SK-N-SH (cell line): ENCODE measurements at regions of chr11 and their contacts with region 1.

Region 1: DNA sequence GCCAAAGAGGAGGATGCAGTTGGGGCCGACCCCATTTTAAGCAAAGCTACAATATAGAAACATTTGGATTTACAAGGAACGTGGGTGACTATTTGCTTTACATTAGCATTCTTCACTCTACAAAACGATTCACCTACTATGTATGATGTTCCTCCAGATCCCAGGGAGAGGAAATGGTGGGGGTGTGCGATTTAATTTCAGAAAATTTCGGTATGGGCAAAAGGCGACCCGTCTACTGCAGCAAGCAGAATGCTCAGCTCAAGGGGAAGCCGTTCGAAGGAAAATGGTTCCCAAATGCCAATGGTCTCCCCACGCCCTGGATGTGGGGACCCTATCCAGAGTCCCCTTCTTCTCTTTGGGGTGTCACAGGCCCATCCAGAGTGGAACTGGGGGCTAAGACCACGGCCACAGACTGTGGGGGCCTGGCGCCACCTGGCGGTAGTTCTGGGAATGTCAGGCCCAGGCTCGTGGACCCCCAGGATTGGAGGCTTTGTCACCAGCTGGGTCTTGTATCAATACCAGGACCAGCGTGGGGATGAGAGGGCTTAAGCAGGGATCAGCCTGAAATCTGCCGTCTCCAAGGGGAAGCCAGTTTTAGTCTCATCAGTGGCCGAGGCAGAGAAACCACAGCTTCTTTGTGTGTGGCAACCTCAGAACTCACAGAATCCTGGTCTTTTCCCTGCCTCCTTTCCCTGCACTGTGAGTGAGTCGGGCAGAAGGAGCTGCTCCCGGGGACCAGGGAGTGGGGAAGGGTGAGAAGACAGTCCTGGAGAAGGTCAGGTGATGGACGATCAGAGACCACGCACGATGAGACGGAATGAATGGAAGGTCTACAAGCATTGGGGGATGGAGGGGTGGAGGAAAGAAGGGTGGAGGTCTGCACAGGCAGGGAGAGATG is 8.4 kb downstream of the LRRC10B start:
- DNase-seq: peak; percentile 93
- H3K4me3 ChIP-seq: peak overlapping the region in 1 of 2 experiments; percentile 44; a peak in 1 of 4 replicates
- H3K27ac ChIP-seq: peak overlapping the region in 1 of 2 experiments; percentile 7; a peak in 1 of 4 replicates
- H3K4me1 ChIP-seq: peaks cover 0 to 38% of the 10 kb centered on the region in 2 experiments; a peak in 1 of 4 replicates
- H3K27me3 ChIP-seq: no peaks in the 10 kb centered on the region
- CTCF ChIP-seq: peak; percentile 97
- EP300 ChIP-seq: no peak
- RAD21 ChIP-seq: peak; percentile 84

Region 2: DNA sequence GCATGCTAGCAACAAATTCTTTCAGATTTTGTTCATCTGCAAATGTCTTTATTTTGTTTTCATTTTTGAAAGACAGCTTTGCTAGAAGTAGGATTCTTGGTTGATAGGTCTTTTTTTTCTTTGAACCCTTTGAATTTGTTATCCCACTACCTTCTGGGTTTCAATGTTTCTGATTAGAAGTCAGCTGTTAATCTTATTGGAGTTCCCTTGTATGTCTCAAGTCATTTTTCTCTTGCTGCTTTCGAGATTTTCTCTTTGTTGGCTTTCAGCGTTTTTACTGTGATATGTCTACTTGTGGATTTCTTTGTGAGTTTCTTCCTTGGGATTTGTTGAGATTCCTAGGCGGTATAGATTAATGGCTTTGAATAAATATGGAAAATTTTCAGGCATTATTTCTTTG is 844.7 kb before region 1 on chr11:
- CTCF ChIA-PET with region 1: no interaction called
- POLR2A ChIA-PET with region 1: no interaction called
- DNase-seq: no peak
- H3K4me3 ChIP-seq: no peak overlapping the region
- H3K27ac ChIP-seq: no peak overlapping the region
- H3K4me1 ChIP-seq: no peaks in the 10 kb centered on the region
- H3K27me3 ChIP-seq: no peaks in the 10 kb centered on the region
- CTCF ChIP-seq: no peak
- EP300 ChIP-seq: no peak
- RAD21 ChIP-seq: no peak

Region 3: DNA sequence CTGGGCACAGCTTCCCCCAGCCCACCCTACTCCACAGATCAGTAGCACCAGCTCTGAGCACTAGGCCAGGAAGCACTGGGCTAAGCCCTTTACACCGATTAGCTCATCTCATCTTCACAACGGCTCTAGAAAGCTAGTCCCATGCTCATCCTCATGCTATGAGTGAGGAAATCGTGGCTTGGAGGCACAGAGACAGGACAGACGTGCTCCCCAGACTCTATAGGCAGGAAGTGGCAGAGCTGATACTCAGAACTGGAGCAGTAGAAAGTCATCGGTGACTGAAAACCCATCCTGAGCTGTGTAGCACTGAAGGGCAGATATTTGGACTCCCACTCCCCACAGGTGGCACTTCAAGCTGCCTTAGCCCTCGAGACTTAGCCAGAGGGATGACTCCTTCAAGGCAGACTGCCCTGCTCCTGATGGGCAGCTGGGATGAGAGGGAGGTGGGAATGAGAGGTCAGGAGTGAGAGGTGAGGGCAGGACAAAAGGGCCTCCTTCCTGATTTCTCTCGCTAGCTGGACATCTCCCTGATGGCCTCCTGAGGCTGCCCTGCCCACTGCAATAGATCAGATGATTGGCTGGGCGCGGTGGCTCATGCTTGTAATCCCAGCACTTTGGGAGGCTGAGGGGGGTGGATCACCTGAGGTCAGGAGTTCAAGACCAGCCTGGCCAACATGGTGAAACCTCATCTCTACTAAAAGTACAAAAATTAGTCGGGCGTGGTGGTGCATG is 405.0 kb before region 1 on chr11:
- CTCF ChIA-PET with region 1: no interaction called
- POLR2A ChIA-PET with region 1: no interaction called
- DNase-seq: no peak
- H3K4me3 ChIP-seq: no peak overlapping the region
- H3K27ac ChIP-seq: no peak overlapping the region
- H3K4me1 ChIP-seq: no peaks in the 10 kb centered on the region; a peak in 1 of 4 replicates
- H3K27me3 ChIP-seq: no peaks in the 10 kb centered on the region
- CTCF ChIP-seq: no peak
- EP300 ChIP-seq: no peak
- RAD21 ChIP-seq: no peak

Region 4: DNA sequence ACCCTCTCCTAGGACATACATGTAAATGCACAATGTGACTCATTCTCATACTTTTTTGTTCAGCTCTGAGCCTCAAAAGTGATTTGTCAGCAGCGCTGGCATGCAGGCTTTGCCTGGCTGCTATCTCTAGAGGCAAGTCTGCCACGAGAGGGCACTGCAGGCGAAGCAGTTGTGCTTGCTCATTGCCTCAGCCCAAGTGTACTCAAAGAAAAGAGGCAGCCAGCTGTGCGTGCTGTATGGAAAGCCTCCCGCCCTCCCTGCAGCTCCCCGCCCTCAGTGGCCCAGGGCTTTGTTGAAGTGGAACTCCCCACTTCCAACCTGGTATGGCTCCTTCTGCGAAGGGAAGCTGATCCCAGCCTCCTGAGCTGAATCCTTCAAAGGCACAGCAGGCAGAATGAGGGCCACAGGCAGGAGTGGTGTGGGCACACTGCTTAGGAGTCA is 70.7 kb before region 1 on chr11:
- CTCF ChIA-PET with region 1: interaction called, 117 read pairs
- POLR2A ChIA-PET with region 1: interaction called, 3 read pairs
- DNase-seq: peak; percentile 78
- H3K4me3 ChIP-seq: no peak overlapping the region; a peak in 1 of 4 replicates
- H3K27ac ChIP-seq: peak overlapping the region; percentile 45 to 53; a peak in 3 of 4 replicates
- H3K4me1 ChIP-seq: peaks cover 5 to 13% of the 10 kb centered on the region in 2 experiments; a peak in 2 of 4 replicates
- H3K27me3 ChIP-seq: no peaks in the 10 kb centered on the region
- CTCF ChIP-seq: peak; percentile 94
- EP300 ChIP-seq: no peak
- RAD21 ChIP-seq: peak; percentile 88

Region 5: GRCh38 chr11:61503212-61503770 is 13.6 kb before region 1 on chr11:
- CTCF ChIA-PET with region 1: interaction called, 42 read pairs
- POLR2A ChIA-PET with region 1: no interaction called
- DNase-seq: no peak
- H3K4me3 ChIP-seq: no peak overlapping the region
- H3K27ac ChIP-seq: no peak overlapping the region
- H3K4me1 ChIP-seq: no peaks in the 10 kb centered on the region; a peak in 2 of 4 replicates
- H3K27me3 ChIP-seq: peaks cover 18% of the 10 kb centered on the region
- CTCF ChIP-seq: no peak
- EP300 ChIP-seq: no peak
- RAD21 ChIP-seq: no peak

Region 6: GRCh38 chr11:61555051-61555969 is 38.4 kb after region 1 on chr11:
- CTCF ChIA-PET with region 1: interaction called, 28 read pairs
- POLR2A ChIA-PET with region 1: no interaction called
- DNase-seq: peak; percentile 90
- H3K4me3 ChIP-seq: peak overlapping the region in 1 of 2 experiments; percentile 1; a peak in 1 of 4 replicates
- H3K27ac ChIP-seq: peak overlapping the region in 1 of 2 experiments; percentile 67; a peak in 2 of 4 replicates
- H3K4me1 ChIP-seq: peaks cover 0 to 65% of the 10 kb centered on the region in 2 experiments; a peak in 1 of 4 replicates
- H3K27me3 ChIP-seq: peaks cover 37% of the 10 kb centered on the region
- CTCF ChIP-seq: peak; percentile 34
- EP300 ChIP-seq: no peak
- RAD21 ChIP-seq: no peak

Region 7: DNA sequence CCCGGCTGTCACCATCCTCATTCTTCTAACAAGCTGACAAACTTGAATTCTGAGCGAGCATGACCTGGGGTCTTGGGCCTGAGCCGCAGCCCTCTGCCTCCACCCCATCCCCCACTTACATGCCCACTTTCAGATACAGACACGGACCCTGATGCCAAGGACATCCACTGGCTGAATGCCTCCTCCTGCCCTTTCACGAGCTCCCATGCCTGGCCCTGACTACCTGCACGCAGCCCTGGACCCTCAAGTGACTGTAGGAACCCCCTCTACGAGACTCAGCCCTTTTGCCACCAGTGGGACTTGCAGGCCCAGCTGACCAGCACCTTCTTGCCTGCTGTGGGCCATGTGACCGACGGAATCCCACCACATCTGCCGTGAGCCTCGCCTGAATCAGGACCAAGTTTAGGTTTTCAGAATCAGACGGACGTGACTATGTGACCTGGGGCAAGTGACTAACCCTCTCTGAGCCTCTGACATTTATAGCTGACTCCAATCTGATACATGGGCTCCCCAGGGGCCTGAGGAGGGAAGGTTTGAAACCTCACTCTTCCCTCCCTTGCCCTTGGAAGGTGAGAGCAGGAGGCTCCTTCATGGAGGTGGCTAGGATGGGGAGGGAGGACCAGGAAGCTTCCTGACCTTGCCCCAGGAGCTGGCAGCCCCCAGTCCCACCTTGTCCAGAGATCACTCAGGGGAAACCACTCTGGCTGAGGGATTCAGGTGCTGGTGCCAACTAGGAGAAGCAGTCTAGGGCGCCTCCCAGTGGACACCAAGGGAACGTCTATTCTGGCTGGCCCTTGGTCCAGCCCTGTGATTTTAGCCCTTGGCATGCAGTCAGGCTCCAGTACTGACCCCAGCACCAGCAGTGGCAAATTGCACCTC is 110.9 kb after region 1 on chr11:
- CTCF ChIA-PET with region 1: interaction called, 37 read pairs
- POLR2A ChIA-PET with region 1: no interaction called
- DNase-seq: peak; percentile 83
- H3K4me3 ChIP-seq: no peak overlapping the region; a peak in 1 of 4 replicates
- H3K27ac ChIP-seq: no peak overlapping the region; a peak in 1 of 4 replicates
- H3K4me1 ChIP-seq: peaks cover 0 to 15% of the 10 kb centered on the region in 2 experiments; a peak in 1 of 4 replicates
- H3K27me3 ChIP-seq: no peaks in the 10 kb centered on the region; the same call in 1 of the 2 replicates
- CTCF ChIP-seq: peak; percentile 87
- EP300 ChIP-seq: 0 out of 4 replicates have a peak, but pooled peaks of 1 of the 2 experiments have one; percentile 28
- RAD21 ChIP-seq: peak; percentile 94

Region 8: DNA sequence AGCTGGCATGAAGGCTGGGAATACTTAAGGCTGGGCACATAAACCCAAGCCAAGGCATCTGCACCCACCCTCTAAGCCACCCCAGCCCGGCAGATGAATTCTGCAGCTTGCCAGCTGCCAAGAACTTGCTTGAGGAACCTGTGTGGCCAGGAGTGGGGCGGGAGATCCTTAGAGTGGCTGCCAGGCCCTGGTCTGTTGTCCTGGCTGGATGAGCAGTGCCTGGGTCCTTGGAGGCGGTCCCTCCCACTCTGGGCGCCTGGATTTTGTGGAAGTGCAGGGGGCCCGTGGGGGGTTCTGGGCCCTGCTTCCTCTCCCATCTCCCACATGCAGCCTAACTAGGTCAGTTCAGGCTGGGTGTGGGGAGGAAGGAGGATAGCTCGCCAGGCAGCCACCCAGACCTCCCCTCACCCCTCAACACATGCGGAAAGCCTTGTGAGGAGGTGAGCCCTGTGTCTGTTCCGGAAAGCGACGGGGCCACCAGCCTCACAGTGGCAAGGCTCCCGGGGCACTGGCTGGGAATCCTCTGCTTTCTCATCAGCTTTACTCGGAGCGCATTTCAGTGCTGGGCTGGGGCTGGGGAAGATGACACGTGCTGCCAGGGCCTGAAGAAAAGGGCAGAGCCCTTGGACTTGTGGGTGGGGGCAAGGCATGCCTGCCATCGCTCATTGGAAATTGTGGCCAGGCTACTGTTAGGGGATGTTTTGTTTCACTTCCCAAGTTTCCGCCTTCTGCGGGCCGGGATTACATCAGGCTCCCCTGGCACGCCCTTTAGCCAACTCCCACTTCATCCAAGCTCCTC is 171.6 kb after region 1 on chr11:
- CTCF ChIA-PET with region 1: no interaction called
- POLR2A ChIA-PET with region 1: no interaction called
- DNase-seq: no peak
- H3K4me3 ChIP-seq: no peak overlapping the region
- H3K27ac ChIP-seq: no peak overlapping the region
- H3K4me1 ChIP-seq: peaks cover 0 to 16% of the 10 kb centered on the region in 2 experiments; a peak in 1 of 4 replicates
- H3K27me3 ChIP-seq: no peaks in the 10 kb centered on the region
- CTCF ChIP-seq: no peak
- EP300 ChIP-seq: no peak
- RAD21 ChIP-seq: no peak